Mammary epithelial cell (primary cell): ENCODE measurements at regions of chr6 and their contacts with region 1.

Region 1: DNA sequence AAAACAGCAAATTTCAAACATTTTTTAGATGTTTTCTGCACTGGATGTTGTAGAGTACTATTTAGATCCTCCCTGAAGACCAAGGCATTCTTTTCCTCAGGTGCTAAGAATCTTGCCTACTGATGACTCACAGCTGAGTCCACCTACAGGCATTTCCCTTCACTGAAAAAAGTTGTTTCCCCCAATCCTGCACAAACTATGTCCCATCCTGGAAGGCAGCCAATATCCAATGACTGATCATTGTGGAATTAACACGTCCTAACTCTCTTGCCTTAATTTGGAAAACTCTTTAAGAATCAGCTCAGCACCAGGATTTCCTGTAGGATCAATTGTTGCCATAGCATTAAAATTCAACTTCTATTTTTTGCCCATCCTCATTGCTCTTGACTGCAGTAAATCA is 268.4 kb upstream of the IRAK1BP1 start:
- DNase-seq: peak; percentile 98
- H3K4me3 ChIP-seq: no peak overlapping the region
- H3K27ac ChIP-seq: peak overlapping the region; percentile 72
- H3K4me1 ChIP-seq: peaks cover 31% of the 10 kb centered on the region
- H3K27me3 ChIP-seq: no peaks in the 10 kb centered on the region
- CTCF ChIP-seq: no peak

Region 2: DNA sequence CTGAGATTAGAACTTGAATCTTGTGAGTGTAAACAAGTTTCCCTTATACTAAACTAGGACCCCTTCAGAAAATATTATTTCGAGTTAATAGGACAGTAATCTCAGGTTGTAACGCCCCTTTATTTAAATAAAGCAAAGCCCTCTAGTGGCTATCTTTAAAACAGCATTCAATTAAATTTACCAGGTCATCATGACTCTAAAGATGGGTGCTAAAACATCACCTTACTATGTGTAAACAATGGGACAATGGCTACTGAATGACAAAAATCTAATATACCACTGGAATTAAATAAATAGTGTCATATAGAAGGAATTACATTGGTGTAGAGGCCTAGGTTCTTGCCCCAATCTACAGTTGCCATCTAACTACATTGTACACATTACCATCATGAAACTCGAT is 13.0 kb after region 1 on chr6:
- CTCF ChIA-PET with region 1: interaction called, 10 read pairs
- dilution Hi-C with region 1: no loop called
- in situ Hi-C with region 1: no loop called
- intact Hi-C with region 1: no loop called
- DNase-seq: no peak
- H3K4me3 ChIP-seq: no peak overlapping the region
- H3K27ac ChIP-seq: no peak overlapping the region
- H3K4me1 ChIP-seq: peaks cover 19% of the 10 kb centered on the region
- H3K27me3 ChIP-seq: no peaks in the 10 kb centered on the region
- CTCF ChIP-seq: peak; percentile 57 to 61